Caco-2 (cell line): ENCODE measurements at regions of chr10 and their contacts with region 1.

Region 1: DNA sequence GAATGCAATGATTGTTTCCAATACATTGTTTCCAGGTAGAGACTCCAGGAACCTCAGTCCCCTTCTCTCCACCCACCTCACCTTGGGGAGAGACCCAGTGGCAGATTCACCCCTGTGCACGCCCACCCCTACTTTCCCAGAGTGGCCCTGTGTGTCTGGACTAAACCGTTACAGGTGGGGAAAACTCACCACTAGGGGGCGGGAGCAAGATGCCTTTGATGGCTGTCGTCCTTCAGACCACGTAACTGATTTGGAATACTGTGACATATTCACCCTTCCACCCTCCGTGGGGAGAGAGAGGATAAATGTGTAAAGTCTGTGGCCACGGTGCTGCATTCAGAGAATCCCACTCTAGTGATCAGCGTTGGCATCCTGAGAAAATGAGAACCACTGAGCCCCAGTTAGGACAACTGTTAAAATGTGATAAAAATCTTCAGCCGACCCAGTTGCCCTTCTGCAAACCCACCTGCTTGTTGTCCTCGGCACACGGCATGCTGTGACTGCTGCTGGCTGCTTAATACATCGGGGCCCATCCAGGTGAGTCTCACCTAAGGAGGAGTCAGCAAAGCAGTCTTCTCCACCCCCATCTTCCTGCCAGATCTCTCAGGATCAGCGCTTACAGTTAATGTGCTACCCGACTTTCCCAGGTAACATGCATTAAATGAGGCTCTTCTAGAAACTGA is 41.5 kb upstream of the NMT2 start:
- DNase-seq: peak; percentile 82 to 88
- H3K4me3 ChIP-seq: no peak overlapping the region
- H3K4me3 Mint-ChIP-seq: no peak overlapping the region
- H3K27ac Mint-ChIP-seq: no peak overlapping the region
- H3K4me1 ChIP-seq: no peaks in the 10 kb centered on the region
- H3K4me1 Mint-ChIP-seq: peaks cover 7% of the 10 kb centered on the region
- H3K27me3 ChIP-seq: no peaks in the 10 kb centered on the region
- H3K27me3 Mint-ChIP-seq: no peaks in the 10 kb centered on the region
- CTCF ChIP-seq: peak; percentile 95 to 97

Region 2: DNA sequence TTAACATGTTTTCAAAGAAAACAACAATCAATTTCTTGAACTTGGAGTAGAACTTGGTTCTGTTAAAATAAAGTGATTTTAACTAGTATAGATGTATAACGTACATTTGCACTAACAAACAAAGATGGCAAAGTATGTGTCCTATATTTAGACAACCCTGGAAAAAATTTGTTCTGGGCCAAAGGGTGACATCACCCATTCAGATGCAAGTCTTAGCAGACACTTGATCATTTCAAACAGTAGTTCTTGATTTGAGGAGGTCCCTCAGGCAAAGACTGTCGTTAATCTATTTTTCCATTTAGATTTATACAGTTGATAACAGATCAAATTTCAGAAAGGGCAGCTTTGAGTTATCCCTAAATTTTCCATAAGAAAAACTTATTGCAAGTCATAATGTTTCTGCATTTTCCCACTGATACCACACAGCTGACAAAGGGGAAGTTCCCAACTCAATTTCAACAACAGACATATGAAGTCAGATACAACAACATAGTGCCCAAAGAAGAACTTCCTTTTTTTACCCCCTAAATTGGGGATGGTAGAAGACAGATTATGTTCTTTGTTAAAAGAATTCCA is 46.6 kb before region 1 on chr10:
- CTCF ChIA-PET with region 1: no interaction called
- POLR2A ChIA-PET with region 1: no interaction called
- intact Hi-C with region 1: no loop called
- DNase-seq: no peak
- H3K4me3 ChIP-seq: no peak overlapping the region
- H3K4me3 Mint-ChIP-seq: no peak overlapping the region
- H3K27ac Mint-ChIP-seq: no peak overlapping the region
- H3K4me1 ChIP-seq: no peaks in the 10 kb centered on the region
- H3K4me1 Mint-ChIP-seq: no peaks in the 10 kb centered on the region
- H3K27me3 ChIP-seq: no peaks in the 10 kb centered on the region
- H3K27me3 Mint-ChIP-seq: no peaks in the 10 kb centered on the region
- CTCF ChIP-seq: no peak

Region 3: DNA sequence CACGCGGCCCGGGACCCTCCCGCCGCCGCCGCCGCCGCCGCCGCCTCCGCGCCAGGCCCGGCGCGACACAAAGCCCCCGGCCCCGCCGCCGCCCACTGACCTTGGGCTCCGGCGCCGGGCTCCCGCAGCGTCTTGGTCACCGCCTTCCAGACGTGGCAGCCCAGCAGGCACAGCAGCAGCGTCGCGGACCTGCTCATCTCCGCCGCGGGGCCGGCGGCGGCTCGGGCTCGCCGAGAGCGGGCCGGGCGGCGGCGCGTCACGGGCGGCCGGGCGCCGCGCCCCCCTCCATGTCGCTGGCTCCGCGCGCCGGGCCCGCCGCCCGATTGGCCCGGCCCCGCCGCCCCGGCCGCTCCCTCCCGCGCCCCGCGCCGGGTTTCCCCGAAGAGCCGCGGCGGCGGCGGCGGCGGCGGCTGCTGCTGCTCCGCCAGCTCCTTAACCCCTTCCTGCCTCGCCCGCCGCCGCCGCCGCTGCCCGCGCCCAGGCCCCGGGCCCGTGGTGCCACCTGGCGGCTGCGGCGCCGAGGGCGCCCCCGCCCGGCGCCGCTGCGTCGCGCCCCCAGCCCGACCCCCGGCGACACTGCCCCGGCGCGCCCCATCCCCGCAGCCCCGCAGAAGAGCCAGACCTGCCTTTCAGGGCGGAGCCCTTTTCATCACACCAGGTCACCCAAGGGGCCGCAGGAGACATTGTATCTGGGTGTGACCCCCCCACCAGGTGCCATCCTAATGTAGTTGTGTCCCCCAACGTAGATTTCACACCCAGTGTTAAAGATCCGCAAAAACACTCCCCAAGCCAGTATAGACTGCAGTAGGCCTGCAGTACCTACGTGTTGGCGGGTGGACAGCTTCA is 161.1 kb after region 1 on chr10 and contains the start of gene FAM171A1:
- CTCF ChIA-PET with region 1: no interaction called
- POLR2A ChIA-PET with region 1: no interaction called
- intact Hi-C with region 1: loop called (anchors 1 kb)
- DNase-seq: peak; percentile 64 to 83
- H3K4me3 ChIP-seq: peak within 1 kb of the TSS; percentile 66
- H3K4me3 Mint-ChIP-seq: peak within 1 kb of the TSS; percentile 87
- H3K27ac Mint-ChIP-seq: peak within 1 kb of the TSS; percentile 90
- H3K4me1 ChIP-seq: peaks cover 9% of the 10 kb centered on the region
- H3K4me1 Mint-ChIP-seq: peaks cover 11% of the 10 kb centered on the region
- H3K27me3 ChIP-seq: peaks cover 1% of the 10 kb centered on the region
- H3K27me3 Mint-ChIP-seq: peaks cover 5% of the 10 kb centered on the region
- CTCF ChIP-seq: peak; percentile 8 to 30
- total RNA-seq, gene FAM171A1: 26.3 and 27.9 TPM in 2 replicates

Region 4: GRCh38 chr10:15385552-15386455 is 175.8 kb after region 1 on chr10:
- CTCF ChIA-PET with region 1: no interaction called
- POLR2A ChIA-PET with region 1: no interaction called
- intact Hi-C with region 1: no loop called
- DNase-seq: no peak
- H3K4me3 ChIP-seq: no peak overlapping the region
- H3K4me3 Mint-ChIP-seq: no peak overlapping the region
- H3K27ac Mint-ChIP-seq: no peak overlapping the region
- H3K4me1 ChIP-seq: peaks cover 15% of the 10 kb centered on the region
- H3K4me1 Mint-ChIP-seq: peaks cover 4% of the 10 kb centered on the region
- H3K27me3 ChIP-seq: no peaks in the 10 kb centered on the region
- H3K27me3 Mint-ChIP-seq: no peaks in the 10 kb centered on the region
- CTCF ChIP-seq: no peak